CD4-positive, alpha-beta T cell (primary cell): ENCODE measurements at regions of chr2 and their contacts with region 1.

Region 1: GRCh38 chr2:207529330-207530159 is at the start of gene CREB1:
- DNase-seq: peak; percentile 99 to 100 (median 100)
- ATAC-seq: peak; percentile 80
- H3K4me3 ChIP-seq: peak within 1 kb of the TSS; percentile 88
- H3K4me3 Mint-ChIP-seq: peak within 1 kb of the TSS; percentile 99
- H3K27ac ChIP-seq: peak within 1 kb of the TSS; percentile 100
- H3K27ac Mint-ChIP-seq: peak within 1 kb of the TSS; percentile 97
- H3K4me1 ChIP-seq: peaks cover 48% of the 10 kb centered on the region
- H3K4me1 Mint-ChIP-seq: peaks cover 78% of the 10 kb centered on the region
- H3K27me3 ChIP-seq: no peaks in the 10 kb centered on the region
- H3K27me3 Mint-ChIP-seq: no peaks in the 10 kb centered on the region
- CTCF ChIP-seq: no peak
- total RNA-seq, gene CREB1: 62.5 to 67.1 TPM

Region 2: GRCh38 chr2:206085742-206086445 is 1443.7 kb before region 1 on chr2 and contains the start of gene INO80D:
- CTCF ChIA-PET with region 1: no interaction called
- POLR2A ChIA-PET with region 1: interaction called, 14 read pairs
- intact Hi-C with region 1: no loop called
- DNase-seq: peak; percentile 62 to 92 (median 72)
- ATAC-seq: peak; percentile 94
- H3K4me3 ChIP-seq: peak within 1 kb of the TSS; percentile 90
- H3K4me3 Mint-ChIP-seq: peak within 1 kb of the TSS; percentile 98
- H3K27ac ChIP-seq: peak within 1 kb of the TSS; percentile 94 to 95
- H3K27ac Mint-ChIP-seq: peak within 1 kb of the TSS; percentile 100
- H3K4me1 ChIP-seq: peaks cover 26% of the 10 kb centered on the region
- H3K4me1 Mint-ChIP-seq: peaks cover 53% of the 10 kb centered on the region
- H3K27me3 ChIP-seq: no peaks in the 10 kb centered on the region
- H3K27me3 Mint-ChIP-seq: no peaks in the 10 kb centered on the region
- CTCF ChIP-seq: peak; percentile 60
- total RNA-seq, gene INO80D: 45.3 to 48.9 TPM

Region 3: DNA sequence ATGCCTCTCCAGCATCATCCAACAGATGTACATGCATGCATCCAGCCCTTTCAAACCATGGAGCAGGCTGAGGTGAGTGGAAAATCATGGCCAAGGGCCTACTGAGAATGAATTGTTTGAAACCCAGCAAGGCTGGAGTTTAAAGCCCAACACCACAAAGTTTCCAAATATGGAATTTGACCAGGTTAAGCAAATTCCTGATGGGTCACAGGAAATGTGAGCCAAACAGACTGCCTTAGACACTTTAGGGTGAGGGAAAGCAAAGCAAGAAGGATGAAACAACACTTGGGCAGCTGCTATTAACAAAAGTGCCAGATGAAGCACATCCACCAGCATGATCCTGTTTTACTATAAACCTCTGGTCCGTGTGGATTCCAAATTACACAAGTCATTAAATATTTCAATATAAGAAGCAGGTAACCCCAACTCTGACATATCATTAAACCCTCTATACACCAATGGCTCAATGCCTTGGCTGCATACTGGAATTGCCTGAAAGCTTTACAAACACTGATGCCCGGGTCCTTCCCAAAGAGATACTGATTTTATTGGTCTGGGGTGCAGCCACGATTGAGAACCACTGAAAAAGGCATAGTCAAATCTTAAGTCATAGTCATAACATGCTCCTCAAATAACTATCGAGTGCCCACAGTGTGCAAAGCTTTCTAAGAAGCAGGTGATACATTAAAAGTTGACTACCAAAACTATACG is 372.9 kb before region 1 on chr2:
- CTCF ChIA-PET with region 1: no interaction called
- POLR2A ChIA-PET with region 1: interaction called, 10 read pairs
- intact Hi-C with region 1: no loop called
- DNase-seq: no peak
- ATAC-seq: peak; percentile 21
- H3K4me3 ChIP-seq: no peak overlapping the region
- H3K4me3 Mint-ChIP-seq: peak overlapping the region; percentile 74
- H3K27ac ChIP-seq: no peak overlapping the region
- H3K27ac Mint-ChIP-seq: peak overlapping the region; percentile 77
- H3K4me1 ChIP-seq: peaks cover 28% of the 10 kb centered on the region
- H3K4me1 Mint-ChIP-seq: peaks cover 97% of the 10 kb centered on the region
- H3K27me3 ChIP-seq: no peaks in the 10 kb centered on the region
- H3K27me3 Mint-ChIP-seq: no peaks in the 10 kb centered on the region
- CTCF ChIP-seq: no peak

Region 4: DNA sequence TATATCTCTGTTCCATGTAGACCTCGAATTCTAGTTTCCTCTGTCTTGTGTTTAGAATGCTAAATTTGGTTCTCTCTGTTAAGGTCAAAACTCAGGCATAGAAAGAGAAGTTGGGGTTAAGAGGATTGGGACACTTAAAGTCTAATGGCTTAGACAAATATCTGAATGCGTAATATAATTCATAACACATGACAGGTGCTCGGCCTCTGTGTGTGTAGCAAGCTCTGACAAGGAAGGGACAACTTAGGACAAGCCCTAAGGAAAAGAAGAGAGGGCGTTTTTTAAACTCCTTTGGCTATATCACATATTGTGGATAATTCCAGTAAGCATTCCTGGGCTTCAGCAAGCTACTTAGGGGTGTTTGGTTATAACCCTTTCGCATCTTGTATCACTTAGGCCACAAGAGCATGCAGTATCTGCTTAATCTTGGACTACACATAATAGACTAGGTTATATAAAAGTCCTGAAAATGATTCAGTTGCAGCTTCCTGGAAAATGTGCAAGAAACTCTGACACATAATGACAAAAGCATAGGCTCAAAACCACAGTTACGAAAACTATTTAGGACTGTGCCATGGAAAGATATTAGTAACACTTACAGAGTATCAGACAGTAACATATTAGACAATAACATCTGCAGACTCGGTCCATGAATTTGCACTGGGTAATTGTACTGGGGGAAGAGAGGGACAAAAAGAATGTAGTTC is 15.8 kb before region 1 on chr2:
- CTCF ChIA-PET with region 1: interaction called, 6 read pairs
- POLR2A ChIA-PET with region 1: interaction called, 62 read pairs
- intact Hi-C with region 1: loop called in 1 of 2 experiments (anchors 2 kb)
- DNase-seq: no peak
- ATAC-seq: no peak
- H3K4me3 ChIP-seq: no peak overlapping the region
- H3K4me3 Mint-ChIP-seq: no peak overlapping the region
- H3K27ac ChIP-seq: no peak overlapping the region
- H3K27ac Mint-ChIP-seq: no peak overlapping the region
- H3K4me1 ChIP-seq: no peaks in the 10 kb centered on the region
- H3K4me1 Mint-ChIP-seq: peaks cover 15% of the 10 kb centered on the region
- H3K27me3 ChIP-seq: no peaks in the 10 kb centered on the region
- H3K27me3 Mint-ChIP-seq: no peaks in the 10 kb centered on the region
- CTCF ChIP-seq: no peak

Region 5: DNA sequence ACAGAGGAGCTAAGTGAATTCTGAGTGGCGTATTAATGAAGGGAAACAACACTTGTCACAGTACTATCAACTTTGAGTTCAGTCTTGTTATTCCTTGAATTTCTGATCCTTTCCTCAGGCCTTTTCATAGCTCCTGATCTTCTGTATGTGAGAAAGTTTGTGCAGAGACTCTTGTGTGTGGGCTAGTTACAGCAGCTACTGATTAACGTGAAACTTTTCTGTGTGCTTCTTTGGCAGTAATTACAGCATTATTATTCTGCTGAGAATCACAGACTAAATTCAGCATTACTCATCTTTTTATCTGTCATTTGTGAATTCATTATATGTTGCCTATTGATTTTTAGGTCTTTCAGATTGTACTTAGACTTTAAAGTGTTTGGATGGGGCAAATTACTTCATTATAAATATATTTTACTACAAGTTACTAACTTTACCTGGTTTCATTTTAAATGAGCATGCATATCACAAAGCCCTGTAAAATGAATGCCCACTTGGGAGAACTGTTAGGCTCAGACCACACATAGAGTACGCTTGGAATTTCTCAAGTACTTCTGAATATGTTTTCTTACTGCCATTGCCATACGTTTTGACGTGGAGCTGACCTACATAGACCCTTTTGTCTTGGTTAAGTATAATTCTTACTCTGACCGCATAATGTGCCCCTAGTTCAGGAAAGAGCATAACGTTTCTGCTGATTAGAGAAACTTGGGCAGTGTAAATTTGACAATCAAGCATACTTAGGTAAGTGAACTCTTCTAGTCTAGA is 36.4 kb after region 1 on chr2:
- CTCF ChIA-PET with region 1: interaction called, 3 read pairs
- POLR2A ChIA-PET with region 1: interaction called, 13 read pairs
- intact Hi-C with region 1: loop called (anchors 5 kb)
- DNase-seq: no peak
- ATAC-seq: no peak
- H3K4me3 ChIP-seq: no peak overlapping the region
- H3K4me3 Mint-ChIP-seq: no peak overlapping the region
- H3K27ac ChIP-seq: no peak overlapping the region
- H3K27ac Mint-ChIP-seq: no peak overlapping the region
- H3K4me1 ChIP-seq: no peaks in the 10 kb centered on the region
- H3K4me1 Mint-ChIP-seq: peaks cover 18% of the 10 kb centered on the region
- H3K27me3 ChIP-seq: no peaks in the 10 kb centered on the region
- H3K27me3 Mint-ChIP-seq: no peaks in the 10 kb centered on the region
- CTCF ChIP-seq: no peak

Region 6: DNA sequence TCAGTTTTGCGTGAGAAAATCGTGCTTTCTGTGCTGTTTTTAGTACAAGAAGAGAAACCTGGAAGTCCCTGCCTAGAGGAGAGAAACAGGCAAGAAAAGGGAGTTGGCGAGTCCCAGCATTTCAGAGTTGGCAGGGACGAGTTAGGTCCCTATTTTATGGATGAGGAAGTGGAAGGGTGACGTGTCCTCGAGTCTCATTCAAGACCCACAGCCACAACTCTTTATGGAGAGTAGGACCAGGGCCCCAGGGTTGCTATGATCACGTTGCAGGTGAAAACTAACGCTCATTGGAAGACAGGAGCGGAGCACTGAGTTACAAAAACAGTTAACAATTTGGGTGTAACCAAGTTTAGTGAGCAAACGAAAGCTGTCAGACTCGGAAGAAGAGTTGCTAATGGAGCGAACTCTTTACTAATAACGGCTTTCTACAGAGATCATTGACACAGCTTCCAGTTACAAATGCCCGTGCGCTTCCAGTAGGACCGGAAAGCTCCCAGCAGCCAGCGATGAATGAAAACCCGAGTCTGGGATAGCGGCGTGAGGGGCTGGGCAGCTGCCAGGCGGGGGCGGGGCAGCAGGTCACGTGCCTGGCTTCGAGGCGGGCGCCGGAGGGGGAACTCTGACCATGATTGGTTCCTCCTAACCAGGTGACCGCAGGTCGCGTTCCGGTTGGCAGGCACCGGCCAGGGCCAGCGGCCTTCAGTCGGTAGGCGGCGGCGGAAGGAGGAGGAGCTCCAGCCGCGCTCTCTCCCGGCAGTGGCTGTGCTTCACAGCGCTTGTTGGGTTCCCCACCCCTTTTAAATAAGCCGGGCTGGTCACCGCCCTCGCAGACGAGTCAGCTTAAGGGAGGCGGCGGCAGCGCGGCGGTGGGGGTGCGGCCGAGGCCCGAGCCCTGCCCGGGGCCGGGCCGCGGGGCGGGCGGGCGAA is 181.5 kb after region 1 on chr2 and contains the start of gene CCNYL1:
- CTCF ChIA-PET with region 1: no interaction called
- POLR2A ChIA-PET with region 1: interaction called, 58 read pairs
- intact Hi-C with region 1: loop called (anchors 5 kb)
- DNase-seq: peak; percentile 95 to 99 (median 97)
- ATAC-seq: peak; percentile 97
- H3K4me3 ChIP-seq: peak within 1 kb of the TSS; percentile 98
- H3K4me3 Mint-ChIP-seq: peak within 1 kb of the TSS; percentile 95
- H3K27ac ChIP-seq: peak within 1 kb of the TSS; percentile 49 to 75
- H3K27ac Mint-ChIP-seq: peak within 1 kb of the TSS; percentile 82
- H3K4me1 ChIP-seq: peaks cover 23% of the 10 kb centered on the region
- H3K4me1 Mint-ChIP-seq: peaks cover 23% of the 10 kb centered on the region
- H3K27me3 ChIP-seq: no peaks in the 10 kb centered on the region
- H3K27me3 Mint-ChIP-seq: no peaks in the 10 kb centered on the region
- CTCF ChIP-seq: no peak
- total RNA-seq, gene CCNYL1: 8.7 to 11.1 TPM